ENCODE measurements at regions of chr22 and their contacts with region 1.

Region 1: DNA sequence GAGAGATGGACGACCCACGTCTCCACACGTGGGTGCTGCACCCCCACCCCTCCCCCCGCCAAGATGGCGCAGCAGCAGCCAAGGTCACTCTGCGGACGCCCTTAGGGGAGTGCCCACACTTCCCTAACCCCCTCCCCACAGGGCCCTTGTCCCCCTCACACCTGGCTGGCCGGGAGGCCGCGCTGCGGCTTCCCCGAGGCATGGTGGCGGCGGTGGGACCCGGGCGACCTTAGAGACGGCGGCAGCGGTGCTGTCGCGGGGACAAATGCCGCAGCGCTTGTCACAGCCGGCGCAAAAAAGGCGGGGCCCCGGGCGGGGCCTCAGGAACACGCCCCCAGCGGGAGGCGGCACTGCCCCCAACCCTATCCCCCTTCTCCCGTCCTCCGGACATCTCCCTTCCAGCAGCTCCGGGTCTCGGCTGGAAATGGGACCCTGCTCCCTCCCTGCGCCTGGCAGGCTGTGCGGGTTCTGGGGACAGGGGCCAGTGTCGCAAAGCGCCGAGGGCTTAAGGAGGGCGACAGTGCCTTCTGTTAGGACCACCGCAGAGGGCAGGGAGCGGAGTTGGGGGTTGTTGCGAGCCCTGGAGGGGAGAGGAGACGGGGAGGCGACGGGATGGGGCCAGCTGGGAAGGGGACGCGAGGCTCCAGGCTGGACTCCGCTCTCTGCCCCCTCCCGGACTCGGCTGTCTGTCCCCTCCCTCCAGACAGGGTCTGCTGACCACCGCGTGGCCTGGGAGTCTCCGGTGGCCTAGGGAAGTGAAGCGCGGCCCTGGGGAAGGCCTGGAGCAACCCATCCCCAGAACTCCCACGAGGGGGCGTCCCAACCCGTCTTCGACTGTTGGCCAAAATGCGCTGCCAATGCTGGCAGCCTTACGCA is at the start of gene CHCHD10:
- DNase-seq: peak; percentile 83 to 90 (median 86)
- ATAC-seq: peak; percentile 77
- H3K4me3 ChIP-seq: peak within 1 kb of the TSS; percentile 70
- H3K27ac ChIP-seq: peak within 1 kb of the TSS; percentile 98
- H3K4me1 ChIP-seq: peaks cover 25 to 62% of the 10 kb centered on the region in 2 experiments; a peak in 4 of 5 replicates
- H3K27me3 ChIP-seq: no peaks in the 10 kb centered on the region
- CTCF ChIP-seq: peak; percentile 66 to 73 (median 68)
- EP300 ChIP-seq: no peak
- POLR2A ChIP-seq: peak; percentile 96
- RAD21 ChIP-seq: peak in 1 of 2 experiments; percentile 55; a peak in 2 of 4 replicates
- polyA plus RNA-seq, gene CHCHD10: 15.2 to 41.0 TPM

Region 2: GRCh38 chr22:23849009-23850006 is 81.4 kb after region 1 on chr22:
- CTCF ChIA-PET with region 1: interaction called, 15 read pairs
- POLR2A ChIA-PET with region 1: interaction called, 3 read pairs
- in situ Hi-C with region 1: no loop called
- intact Hi-C with region 1: loop called (anchors 5 kb)
- DNase-seq: peak; percentile 78 to 84 (median 82)
- ATAC-seq: peak; percentile 97
- H3K4me3 ChIP-seq: no peak overlapping the region
- H3K27ac ChIP-seq: no peak overlapping the region
- H3K4me1 ChIP-seq: peaks cover 3 to 20% of the 10 kb centered on the region in 2 experiments; a peak in 3 of 5 replicates
- H3K27me3 ChIP-seq: no peaks in the 10 kb centered on the region; a peak in 1 of 5 replicates
- CTCF ChIP-seq: peak; percentile 82 to 91 (median 87)
- EP300 ChIP-seq: no peak
- POLR2A ChIP-seq: no peak
- RAD21 ChIP-seq: peak; percentile 80 to 92